BJ (cell line): ENCODE measurements at regions of chr7 and their contacts with region 1.

Region 1: DNA sequence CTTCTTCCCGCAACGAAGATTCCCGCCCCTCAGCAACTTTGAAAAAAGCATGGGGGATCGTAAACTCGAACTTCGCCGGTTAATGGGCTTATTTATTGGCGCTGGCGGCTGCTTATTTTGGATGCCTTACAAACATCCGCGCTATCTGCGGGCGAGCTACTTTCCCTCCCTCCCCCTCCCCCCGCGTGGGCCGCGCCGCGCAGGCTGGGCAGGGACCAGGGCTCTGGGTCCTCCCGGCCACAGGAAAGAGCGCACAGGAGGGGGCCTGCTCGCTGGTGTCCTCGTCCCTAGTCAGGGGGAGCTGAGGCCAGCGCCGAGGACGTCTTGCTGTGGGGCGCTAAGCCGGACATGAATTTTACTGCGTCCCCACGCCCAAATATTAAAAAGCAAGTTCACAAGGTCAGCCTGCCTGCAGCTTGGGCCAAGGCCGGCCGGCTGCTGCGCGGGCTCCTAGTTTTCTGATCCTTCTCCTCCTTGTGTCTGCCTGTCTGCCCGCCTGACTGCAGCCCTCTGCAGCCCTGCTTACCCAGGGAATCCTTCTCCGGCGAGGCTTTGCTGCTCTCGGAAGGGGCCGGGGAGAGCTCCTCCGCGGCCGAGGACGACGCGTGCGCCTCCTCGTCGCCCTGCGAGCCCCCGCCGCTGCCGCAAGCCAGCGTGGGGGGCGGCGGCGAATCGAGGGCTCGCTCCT is 1.2 kb downstream of the HOXA10 start:
- DNase-seq: peak; percentile 79
- H3K4me3 ChIP-seq: peak overlapping the region; percentile 72
- H3K27me3 ChIP-seq: no peaks in the 10 kb centered on the region
- CTCF ChIP-seq: no peak

Region 2: GRCh38 chr7:26891400-26892355 is 281.3 kb before region 1 on chr7:
- CTCF ChIA-PET with region 1: no interaction called
- POLR2A ChIA-PET with region 1: no interaction called
- DNase-seq: no peak
- H3K4me3 ChIP-seq: no peak overlapping the region
- H3K27me3 ChIP-seq: no peaks in the 10 kb centered on the region
- CTCF ChIP-seq: no peak

Region 3: DNA sequence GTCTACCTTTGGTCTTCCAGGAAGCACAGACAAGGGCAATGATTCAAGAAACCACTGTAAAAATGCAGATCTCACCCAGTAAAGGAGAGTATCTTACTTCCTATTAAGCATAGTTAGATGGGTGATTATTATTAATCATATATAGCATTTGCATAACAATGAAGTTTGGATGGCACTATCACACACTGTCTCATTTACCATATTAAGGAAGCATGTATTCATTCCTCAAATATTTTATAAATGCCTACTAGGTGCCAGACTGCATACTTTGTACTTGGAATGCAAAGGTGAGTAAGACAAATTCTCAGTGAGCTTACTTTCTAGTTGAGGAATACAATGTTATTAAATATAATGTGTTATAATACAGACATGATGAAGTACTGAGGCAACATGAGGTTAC is 254.7 kb before region 1 on chr7:
- CTCF ChIA-PET with region 1: no interaction called
- POLR2A ChIA-PET with region 1: no interaction called
- DNase-seq: no peak
- H3K4me3 ChIP-seq: no peak overlapping the region
- H3K27me3 ChIP-seq: no peaks in the 10 kb centered on the region
- CTCF ChIP-seq: no peak

Region 4: DNA sequence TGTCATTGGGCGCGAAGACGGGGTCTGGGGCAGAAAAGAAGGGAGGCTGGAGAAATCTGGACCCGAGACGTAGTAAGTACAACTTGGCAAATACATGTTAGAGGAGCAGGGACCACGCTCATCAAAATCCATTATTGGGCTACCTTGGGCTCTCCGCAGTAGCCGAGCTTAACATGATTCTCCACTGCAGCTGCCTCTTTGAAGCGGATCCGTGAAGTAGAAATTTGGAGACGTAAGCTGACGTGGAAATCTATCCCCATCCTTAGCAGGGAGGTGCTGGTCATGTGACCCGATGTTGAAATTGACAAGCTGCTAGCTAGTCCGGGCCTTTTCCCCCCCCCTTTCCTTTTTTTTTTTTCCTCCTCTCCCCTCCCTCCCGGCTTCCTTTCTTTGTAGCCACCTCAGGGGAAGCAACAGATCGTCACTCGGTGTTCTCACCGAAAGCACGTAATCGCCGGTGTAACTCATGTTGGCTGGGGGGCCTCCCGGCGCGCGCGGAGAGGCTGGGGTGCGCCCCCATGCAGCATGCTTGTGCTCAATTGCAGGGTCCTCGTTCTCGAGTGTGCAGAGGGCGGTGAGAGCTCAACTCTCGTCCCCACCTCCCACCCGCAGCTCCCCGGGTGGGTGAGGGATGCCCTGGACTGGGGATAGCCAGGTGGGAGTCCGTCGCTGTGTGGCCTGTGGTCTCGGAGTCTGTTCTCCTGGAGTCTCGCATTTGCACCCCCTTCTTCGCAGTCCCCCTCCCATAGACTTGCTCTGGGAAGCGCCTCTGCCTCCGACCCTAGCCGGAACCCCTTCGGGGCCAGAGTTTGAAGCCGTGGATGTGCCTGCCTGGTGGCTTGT is 12.3 kb after region 1 on chr7 and contains the start of gene HOXA11:
- CTCF ChIA-PET with region 1: interaction called, 187 read pairs
- POLR2A ChIA-PET with region 1: interaction called, 11 read pairs
- DNase-seq: peak; percentile 94
- H3K4me3 ChIP-seq: peak within 1 kb of the TSS; percentile 88
- H3K27me3 ChIP-seq: no peaks in the 10 kb centered on the region
- CTCF ChIP-seq: no peak
- polyA plus RNA-seq, gene HOXA11: 27.7 and 34.0 TPM in 2 replicates

Region 5: GRCh38 chr7:28654110-28654509 is 1481.1 kb after region 1 on chr7:
- CTCF ChIA-PET with region 1: no interaction called
- POLR2A ChIA-PET with region 1: no interaction called
- DNase-seq: no peak
- H3K4me3 ChIP-seq: no peak overlapping the region
- H3K27me3 ChIP-seq: no peaks in the 10 kb centered on the region
- CTCF ChIP-seq: no peak